ENCODE measurements at regions of chr14 and their contacts with region 1.

Region 1: DNA sequence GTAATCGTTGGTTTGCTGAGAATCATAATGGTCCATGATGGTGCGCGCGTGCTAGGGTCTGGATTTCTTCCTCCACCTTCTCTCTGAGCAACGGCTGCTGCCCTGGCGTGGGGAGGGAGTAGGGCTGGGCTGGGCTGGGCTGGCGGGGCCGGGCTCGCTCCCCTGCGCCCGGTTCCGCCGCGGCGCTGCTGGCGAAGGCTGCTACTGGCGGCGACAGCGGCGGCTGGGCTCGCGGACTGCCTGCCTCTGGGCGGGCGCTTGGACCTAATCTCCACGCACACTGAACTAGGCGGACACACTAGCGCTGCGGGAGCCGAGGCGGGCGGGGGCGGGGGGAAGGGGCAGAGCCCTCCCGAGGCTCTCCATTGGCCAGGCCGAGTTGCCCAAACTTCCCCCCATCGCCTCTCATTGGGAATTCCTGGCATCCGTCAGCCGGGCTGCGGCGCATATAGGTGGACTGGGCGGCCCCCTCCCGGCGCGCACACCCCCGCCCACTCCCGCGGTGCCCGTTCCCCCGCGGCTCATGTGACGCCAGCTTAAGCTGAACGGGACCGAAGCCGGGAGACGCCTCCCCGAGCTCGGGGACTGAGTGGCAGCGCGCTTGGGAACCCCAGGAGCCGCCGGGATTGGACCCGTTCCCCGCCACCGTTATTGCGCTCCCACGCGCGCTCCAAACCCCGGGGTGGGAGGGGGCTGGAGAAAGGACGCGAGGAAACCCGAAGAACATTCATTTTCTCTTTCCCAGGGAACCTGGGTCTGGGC is at the start of gene ACTN1:
- DNase-seq: peak; percentile 93 to 98
- H3K4me3 ChIP-seq: peak within 1 kb of the TSS; percentile 78 to 97
- H3K27ac ChIP-seq: peak within 1 kb of the TSS; percentile 99 to 100
- H3K4me1 ChIP-seq: peaks cover 21 to 52% of the 10 kb centered on the region in 2 donors
- H3K27me3 ChIP-seq: no peaks in the 10 kb centered on the region
- CTCF ChIP-seq: no peak
- total RNA-seq, gene ACTN1: 814 TPM

Region 2: DNA sequence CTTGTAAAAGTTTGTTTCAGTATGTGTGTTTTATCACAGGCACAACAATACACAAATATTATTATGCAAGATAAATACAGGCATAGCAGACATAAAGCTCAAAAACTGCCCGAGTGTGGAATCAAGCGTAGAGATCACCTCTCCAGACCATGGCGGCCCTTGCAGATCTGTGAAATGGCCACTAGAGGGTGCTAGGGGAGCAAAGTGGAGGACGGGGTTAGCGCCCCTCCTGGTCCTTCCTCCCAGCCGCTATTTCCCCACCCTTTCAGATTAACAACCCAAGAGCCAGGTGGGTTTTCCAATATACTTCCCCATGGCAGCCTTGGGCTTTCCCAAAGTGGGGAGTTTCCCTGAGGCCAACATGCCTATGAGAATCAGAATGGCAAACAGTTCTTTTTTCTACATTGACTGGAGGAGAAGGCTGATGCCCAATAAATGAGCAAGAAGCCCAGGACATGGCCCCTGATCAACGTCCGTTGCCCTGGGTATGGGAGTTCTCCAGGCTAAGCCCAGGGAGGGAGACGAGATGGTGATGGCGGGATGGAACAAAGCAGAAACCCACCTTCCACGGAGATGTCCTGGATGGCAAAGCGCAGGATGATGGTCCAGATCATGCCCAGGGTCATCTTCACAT is 67.5 kb before region 1 on chr14:
- intact Hi-C with region 1: loop called (anchors 10 kb)
- DNase-seq: peak in 1 of 2 donors; percentile 86
- H3K4me3 ChIP-seq: no peak overlapping the region
- H3K27ac ChIP-seq: peak overlapping the region; percentile 56 to 59
- H3K4me1 ChIP-seq: peaks cover 11 to 54% of the 10 kb centered on the region in 2 donors
- H3K27me3 ChIP-seq: no peaks in the 10 kb centered on the region
- CTCF ChIP-seq: peak; percentile 95 to 96 (median 96)

Region 3: DNA sequence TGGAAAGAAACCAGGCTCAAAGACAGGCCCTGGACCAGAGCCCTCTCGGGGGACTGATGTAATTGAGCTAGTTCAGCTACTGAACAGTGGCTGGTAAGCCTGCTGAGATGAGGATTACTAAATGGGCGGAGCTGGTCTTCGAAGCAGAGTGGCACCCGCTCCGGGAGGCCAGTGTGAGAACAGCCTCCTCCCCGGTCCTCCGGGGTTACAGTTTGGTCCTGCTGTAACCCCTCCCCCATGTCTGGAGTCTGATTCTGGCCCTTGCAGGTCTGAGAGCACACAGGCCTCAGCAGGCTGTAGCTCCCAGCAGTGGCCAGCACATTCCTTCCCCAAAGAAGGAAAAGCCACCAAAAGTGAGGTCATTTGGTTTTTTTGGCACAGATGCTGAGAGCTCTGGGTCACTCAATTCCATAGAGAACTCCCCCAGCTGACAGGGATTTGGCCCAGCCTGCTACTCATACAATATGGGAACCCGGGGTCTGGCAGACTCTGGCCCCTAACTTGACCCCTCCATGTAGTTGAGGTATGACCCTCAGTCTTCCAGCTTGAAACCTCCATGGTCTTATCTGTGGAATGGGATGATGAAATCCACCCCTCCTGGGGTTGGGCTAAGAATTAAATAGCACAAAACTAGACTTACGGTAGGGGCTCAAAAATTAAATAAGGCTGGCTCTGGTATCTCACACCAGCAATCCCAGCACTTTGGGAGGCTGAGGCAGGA is 39.1 kb before region 1 on chr14:
- intact Hi-C with region 1: loop called (anchors 2 kb)
- DNase-seq: peak; percentile 83 to 97
- H3K4me3 ChIP-seq: peak overlapping the region in 1 of 2 donors; percentile 47
- H3K27ac ChIP-seq: peak overlapping the region; percentile 93
- H3K4me1 ChIP-seq: peaks cover 62 to 96% of the 10 kb centered on the region in 2 donors
- H3K27me3 ChIP-seq: no peaks in the 10 kb centered on the region
- CTCF ChIP-seq: no peak

Region 4: GRCh38 chr14:68951042-68951914 is 27.9 kb before region 1 on chr14:
- intact Hi-C with region 1: loop called (anchors 2 kb)
- DNase-seq: peak; percentile 75 to 99
- H3K4me3 ChIP-seq: peak overlapping the region; percentile 13 to 64
- H3K27ac ChIP-seq: peak overlapping the region; percentile 92 to 93
- H3K4me1 ChIP-seq: peaks cover 71 to 92% of the 10 kb centered on the region in 2 donors
- H3K27me3 ChIP-seq: no peaks in the 10 kb centered on the region
- CTCF ChIP-seq: no peak

Region 5: GRCh38 chr14:69005432-69006147 is 26.4 kb after region 1 on chr14:
- intact Hi-C with region 1: loop called (anchors 1 kb)
- DNase-seq: peak; percentile 73 to 97
- H3K4me3 ChIP-seq: peak overlapping the region in 1 of 2 donors; percentile 10
- H3K27ac ChIP-seq: peak overlapping the region; percentile 75 to 81
- H3K4me1 ChIP-seq: peaks cover 10 to 31% of the 10 kb centered on the region in 2 donors
- H3K27me3 ChIP-seq: no peaks in the 10 kb centered on the region
- CTCF ChIP-seq: no peak

Region 6: GRCh38 chr14:69043596-69044260 is 64.5 kb after region 1 on chr14:
- intact Hi-C with region 1: loop called (anchors 1 kb)
- DNase-seq: peak; percentile 45 to 87
- H3K4me3 ChIP-seq: no peak overlapping the region
- H3K27ac ChIP-seq: peak overlapping the region; percentile 92 to 95
- H3K4me1 ChIP-seq: peaks cover 34 to 78% of the 10 kb centered on the region in 2 donors
- H3K27me3 ChIP-seq: no peaks in the 10 kb centered on the region
- CTCF ChIP-seq: no peak

Region 7: DNA sequence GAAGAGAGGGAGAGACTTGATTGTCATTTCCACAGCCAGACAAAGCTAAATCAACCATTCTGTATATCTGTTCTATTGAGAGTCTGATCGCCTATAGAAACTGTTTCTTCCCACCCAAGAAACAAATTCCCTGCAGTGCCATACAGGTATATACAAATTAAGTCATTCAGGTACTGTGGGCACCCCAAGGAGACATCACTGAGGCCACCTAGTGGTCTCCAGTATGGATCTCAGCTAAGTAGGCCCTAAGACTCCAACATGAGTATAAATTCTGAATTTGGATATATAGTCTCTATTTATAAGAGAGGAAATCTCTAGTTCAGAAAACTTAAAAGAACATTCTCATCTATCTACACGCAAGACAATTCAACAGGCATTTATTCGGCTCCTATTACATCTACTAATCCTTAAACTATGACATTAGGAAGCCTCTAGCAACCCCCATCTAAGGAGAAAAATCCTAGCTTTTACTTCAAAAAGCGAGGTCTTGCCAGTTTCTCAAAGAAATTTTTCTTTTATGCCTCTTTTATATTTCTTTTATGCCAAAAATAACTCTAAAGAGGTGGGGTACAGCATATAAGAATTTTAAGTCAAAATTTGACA is 111.1 kb after region 1 on chr14:
- intact Hi-C with region 1: loop called (anchors 2 kb)
- DNase-seq: no peak
- H3K4me3 ChIP-seq: no peak overlapping the region
- H3K27ac ChIP-seq: peak overlapping the region; percentile 81 to 83
- H3K4me1 ChIP-seq: peaks cover 3 to 52% of the 10 kb centered on the region in 2 donors
- H3K27me3 ChIP-seq: no peaks in the 10 kb centered on the region
- CTCF ChIP-seq: peak; percentile 53 to 68 (median 64)

Measured in ascending aorta (tissue), 2 donors.